ENCODE measurements at regions of chr19 and their contacts with region 1.

Region 1: DNA sequence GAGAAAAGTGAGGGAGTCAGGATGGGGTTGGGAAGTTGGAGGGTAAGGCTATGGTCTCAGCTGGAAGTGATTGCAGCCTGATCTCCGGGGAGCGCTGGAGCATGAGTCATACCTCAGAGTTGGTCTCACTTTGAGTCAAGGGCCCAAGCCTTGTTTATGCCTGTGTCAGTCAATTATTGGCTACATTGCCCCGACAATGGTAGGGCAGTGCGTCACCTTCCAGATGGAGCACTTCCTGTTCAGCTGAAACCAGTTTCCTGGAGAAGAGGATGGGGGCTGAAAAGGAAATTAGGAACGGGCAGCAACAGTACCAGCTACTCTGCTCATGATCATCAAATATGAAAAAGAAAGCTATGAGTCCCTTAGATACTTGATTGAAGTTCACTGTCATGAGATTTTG is 60.4 kb downstream of the ADGRE1 start:
- DNase-seq: peak; percentile 66
- H3K4me3 ChIP-seq: no peak overlapping the region
- H3K27ac ChIP-seq: peak overlapping the region; percentile 40
- H3K4me1 ChIP-seq: peaks cover 10% of the 10 kb centered on the region
- H3K27me3 ChIP-seq: no peaks in the 10 kb centered on the region
- CTCF ChIP-seq: no peak
- POLR2A ChIP-seq: no peak

Region 2: GRCh38 chr19:6572217-6572616 is 375.5 kb before region 1 on chr19:
- CTCF ChIA-PET with region 1: no interaction called
- POLR2A ChIA-PET with region 1: no interaction called
- dilution Hi-C with region 1: no loop called
- intact Hi-C with region 1: no loop called
- DNase-seq: no peak
- H3K4me3 ChIP-seq: no peak overlapping the region
- H3K27ac ChIP-seq: no peak overlapping the region
- H3K4me1 ChIP-seq: no peaks in the 10 kb centered on the region
- H3K27me3 ChIP-seq: peaks cover 0 to 2% of the 10 kb centered on the region in 2 experiments
- CTCF ChIP-seq: no peak
- POLR2A ChIP-seq: no peak

Region 3: DNA sequence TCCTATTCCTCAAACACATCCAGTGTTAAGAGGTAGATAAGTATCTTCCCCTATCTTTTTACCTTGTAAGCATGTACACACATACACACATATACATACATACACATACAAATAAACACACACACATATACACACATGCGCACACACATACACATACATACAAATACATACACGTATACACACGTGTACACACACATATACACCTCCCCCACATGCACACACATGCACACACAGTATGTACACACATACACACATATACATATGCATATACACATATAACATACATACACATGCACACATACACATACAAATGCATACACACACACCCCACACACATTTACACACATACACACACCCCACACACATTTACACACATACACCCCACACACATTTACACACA is 36.2 kb before region 1 on chr19:
- CTCF ChIA-PET with region 1: no interaction called
- POLR2A ChIA-PET with region 1: no interaction called
- dilution Hi-C with region 1: no loop called
- intact Hi-C with region 1: no loop called
- DNase-seq: no peak
- H3K4me3 ChIP-seq: no peak overlapping the region
- H3K27ac ChIP-seq: no peak overlapping the region
- H3K4me1 ChIP-seq: no peaks in the 10 kb centered on the region
- H3K27me3 ChIP-seq: no peaks in the 10 kb centered on the region
- CTCF ChIP-seq: no peak
- POLR2A ChIP-seq: no peak

Region 4: DNA sequence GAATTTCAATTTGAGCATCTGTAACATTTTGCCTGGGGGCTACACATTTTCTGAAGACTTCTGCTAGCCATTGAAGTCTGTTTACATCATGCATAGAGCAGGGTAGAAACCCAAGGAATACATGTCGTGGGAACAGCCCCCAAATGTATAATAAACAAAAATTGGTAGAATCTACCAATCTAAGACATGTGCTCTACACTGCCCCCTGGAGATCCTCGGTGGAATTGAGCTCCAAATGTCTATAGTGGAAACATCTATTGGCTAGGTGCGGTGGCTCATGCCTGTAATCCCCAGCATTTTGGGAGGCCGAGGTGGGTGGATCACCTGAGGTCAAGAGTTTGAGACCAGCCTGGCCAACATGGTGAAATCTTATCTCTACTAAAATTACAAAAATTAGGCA is 16.2 kb after region 1 on chr19:
- CTCF ChIA-PET with region 1: interaction called, 41 read pairs
- POLR2A ChIA-PET with region 1: no interaction called
- dilution Hi-C with region 1: no loop called
- intact Hi-C with region 1: no loop called
- DNase-seq: no peak
- H3K4me3 ChIP-seq: no peak overlapping the region
- H3K27ac ChIP-seq: no peak overlapping the region
- H3K4me1 ChIP-seq: no peaks in the 10 kb centered on the region
- H3K27me3 ChIP-seq: no peaks in the 10 kb centered on the region
- CTCF ChIP-seq: peak; percentile 31 to 33
- POLR2A ChIP-seq: no peak

Region 5: GRCh38 chr19:6987850-6988249 is 40.1 kb after region 1 on chr19:
- CTCF ChIA-PET with region 1: no interaction called
- POLR2A ChIA-PET with region 1: no interaction called
- dilution Hi-C with region 1: no loop called
- intact Hi-C with region 1: no loop called
- DNase-seq: no peak
- H3K4me3 ChIP-seq: no peak overlapping the region
- H3K27ac ChIP-seq: no peak overlapping the region
- H3K4me1 ChIP-seq: no peaks in the 10 kb centered on the region
- H3K27me3 ChIP-seq: no peaks in the 10 kb centered on the region
- CTCF ChIP-seq: no peak
- POLR2A ChIP-seq: no peak